Aorta (tissue), 5 donors: ENCODE measurements at regions of chr6 and their contacts with region 1.

Region 1: DNA sequence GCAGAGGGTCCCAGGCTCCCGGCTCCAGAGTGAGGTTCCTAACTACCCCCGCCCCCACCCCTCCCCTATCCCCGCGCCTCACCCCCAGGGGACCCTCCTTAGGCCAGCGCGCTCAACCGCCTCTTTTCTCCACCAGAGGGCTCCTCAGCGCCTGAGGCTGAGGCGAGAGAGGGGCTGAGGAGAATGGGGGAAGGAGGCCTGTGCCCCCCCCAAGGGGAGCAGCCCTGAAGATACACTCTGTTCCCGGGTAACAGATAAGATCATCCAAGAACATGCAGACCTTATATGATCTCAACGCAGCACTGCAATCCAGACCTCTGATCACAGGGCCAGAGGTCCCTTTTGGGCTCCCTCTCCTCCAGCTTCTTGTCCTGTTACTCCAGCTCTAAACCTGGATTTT is 43.3 kb upstream of the MRPS10 start:
- DNase-seq: peak in 1 of 2 donors; percentile 77
- ATAC-seq: peak; percentile 82
- H3K4me3 ChIP-seq: no peak overlapping the region
- H3K27ac ChIP-seq: no peak overlapping the region
- H3K4me1 ChIP-seq: no peaks in the 10 kb centered on the region
- H3K27me3 ChIP-seq: no peaks in the 10 kb centered on the region

Region 2: DNA sequence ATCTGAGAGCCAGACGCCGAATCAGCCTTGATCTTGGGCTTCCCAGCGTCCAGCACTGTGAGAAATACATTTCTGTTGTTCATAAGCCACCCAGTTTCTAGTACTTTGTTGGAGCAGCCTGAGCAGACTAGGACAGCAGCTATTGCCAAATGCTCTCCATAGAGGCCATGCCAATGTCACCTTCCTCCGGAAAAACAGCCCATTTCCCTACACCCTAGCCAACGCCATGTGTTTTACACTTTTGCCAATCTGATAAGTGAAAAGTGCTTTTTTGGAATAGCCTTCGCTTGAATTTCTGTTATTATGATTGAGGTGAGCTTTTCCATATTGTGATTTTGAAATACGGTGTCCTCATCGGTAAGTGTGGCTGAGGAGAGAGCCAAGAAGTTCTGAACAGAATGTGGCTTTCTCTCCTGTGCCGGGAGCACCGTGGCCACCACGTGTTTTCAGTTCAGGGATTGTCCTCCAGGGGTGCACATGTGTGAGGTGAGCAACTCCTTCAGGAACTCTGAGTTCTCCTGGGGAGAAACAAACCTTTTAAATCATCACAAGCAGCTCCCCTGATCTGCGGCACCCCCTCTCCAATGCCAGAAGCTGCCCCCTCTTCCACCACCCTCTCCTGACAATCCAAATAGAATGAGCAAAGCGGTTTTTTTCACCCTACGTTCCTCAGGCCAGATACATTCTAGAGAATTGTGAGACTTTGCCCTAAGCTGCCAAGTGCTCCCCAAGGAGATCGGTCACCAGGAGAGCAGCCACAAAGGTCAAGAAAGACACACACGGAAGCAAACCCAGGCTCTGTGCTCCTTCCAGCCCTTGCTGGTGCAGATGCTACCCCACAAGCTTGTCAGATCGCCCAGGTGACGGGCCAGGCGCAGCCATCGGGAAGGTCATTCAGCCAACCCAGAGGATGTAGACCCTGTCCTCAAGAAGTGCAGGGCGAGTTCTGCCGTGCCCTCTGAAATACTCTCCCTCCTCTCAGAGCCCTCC is 174.6 kb before region 1 on chr6:
- intact Hi-C with region 1: no loop called
- DNase-seq: no peak
- ATAC-seq: peak; percentile 54
- H3K4me3 ChIP-seq: no peak overlapping the region
- H3K27ac ChIP-seq: no peak overlapping the region
- H3K4me1 ChIP-seq: no peaks in the 10 kb centered on the region
- H3K27me3 ChIP-seq: no peaks in the 10 kb centered on the region

Region 3: DNA sequence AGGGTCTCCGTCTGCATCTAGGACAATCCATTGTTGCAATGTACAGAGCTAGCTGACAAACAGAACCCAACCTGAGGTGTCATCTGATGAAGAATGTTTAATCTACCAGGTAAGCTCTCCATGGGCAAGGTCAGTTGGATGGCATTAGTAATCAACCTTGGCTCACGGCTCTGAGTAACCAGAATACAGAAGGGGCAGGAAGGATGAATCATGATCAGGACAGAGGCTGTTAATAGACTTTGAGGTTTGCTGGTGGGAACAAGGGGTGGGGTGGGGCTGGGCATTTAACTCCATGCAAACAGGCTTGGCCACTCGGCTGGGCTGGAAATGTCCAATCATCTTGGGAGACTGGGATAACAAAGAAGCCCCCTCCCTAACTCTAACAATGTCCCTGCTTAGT is 33.8 kb after region 1 on chr6:
- intact Hi-C with region 1: no loop called
- DNase-seq: no peak
- ATAC-seq: no peak
- H3K4me3 ChIP-seq: no peak overlapping the region
- H3K27ac ChIP-seq: no peak overlapping the region
- H3K4me1 ChIP-seq: no peaks in the 10 kb centered on the region
- H3K27me3 ChIP-seq: no peaks in the 10 kb centered on the region

Region 4: DNA sequence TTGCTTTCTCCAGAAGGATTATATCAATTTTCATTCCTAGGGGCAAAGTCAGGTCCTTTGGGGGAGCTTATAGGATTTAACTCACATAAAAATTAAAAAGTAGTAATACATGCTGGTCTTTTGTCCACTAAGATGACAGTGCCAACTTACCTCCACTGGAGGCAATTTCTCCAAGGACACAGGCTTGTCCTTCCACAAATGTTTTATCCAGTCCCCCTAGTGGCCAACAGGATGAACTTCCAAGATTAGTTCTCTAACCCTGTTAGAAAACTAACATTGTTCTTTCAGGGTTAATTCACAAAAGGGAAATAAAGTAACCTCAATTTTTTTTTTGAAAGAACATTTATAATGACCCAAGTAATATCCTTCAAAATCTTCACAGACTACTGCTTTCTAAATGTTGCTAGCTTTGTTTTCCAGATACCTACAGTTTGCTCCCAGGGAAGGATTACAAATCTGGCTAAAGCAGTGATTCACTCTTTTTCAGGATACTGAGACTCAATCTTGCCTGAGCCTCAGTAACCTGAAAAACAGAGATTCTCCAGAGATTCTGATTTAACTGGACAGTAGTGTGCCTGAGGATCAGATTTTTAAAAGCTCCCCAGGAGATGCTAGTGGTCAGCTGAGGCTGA is 271.2 kb after region 1 on chr6:
- intact Hi-C with region 1: loop called in 1 of 2 experiments (anchors 5 kb)
- DNase-seq: no peak
- ATAC-seq: no peak
- H3K4me3 ChIP-seq: no peak overlapping the region
- H3K27ac ChIP-seq: no peak overlapping the region
- H3K4me1 ChIP-seq: no peaks in the 10 kb centered on the region
- H3K27me3 ChIP-seq: no peaks in the 10 kb centered on the region

Region 5: GRCh38 chr6:43491750-43492661 is 1231.0 kb after region 1 on chr6:
- intact Hi-C with region 1: no loop called
- DNase-seq: peak; percentile 86 to 94
- ATAC-seq: no peak
- H3K4me3 ChIP-seq: no peak overlapping the region
- H3K27ac ChIP-seq: no peak overlapping the region
- H3K4me1 ChIP-seq: no peaks in the 10 kb centered on the region
- H3K27me3 ChIP-seq: no peaks in the 10 kb centered on the region